ENCODE measurements at regions of chr17 and their contacts with region 1.

Region 1: DNA sequence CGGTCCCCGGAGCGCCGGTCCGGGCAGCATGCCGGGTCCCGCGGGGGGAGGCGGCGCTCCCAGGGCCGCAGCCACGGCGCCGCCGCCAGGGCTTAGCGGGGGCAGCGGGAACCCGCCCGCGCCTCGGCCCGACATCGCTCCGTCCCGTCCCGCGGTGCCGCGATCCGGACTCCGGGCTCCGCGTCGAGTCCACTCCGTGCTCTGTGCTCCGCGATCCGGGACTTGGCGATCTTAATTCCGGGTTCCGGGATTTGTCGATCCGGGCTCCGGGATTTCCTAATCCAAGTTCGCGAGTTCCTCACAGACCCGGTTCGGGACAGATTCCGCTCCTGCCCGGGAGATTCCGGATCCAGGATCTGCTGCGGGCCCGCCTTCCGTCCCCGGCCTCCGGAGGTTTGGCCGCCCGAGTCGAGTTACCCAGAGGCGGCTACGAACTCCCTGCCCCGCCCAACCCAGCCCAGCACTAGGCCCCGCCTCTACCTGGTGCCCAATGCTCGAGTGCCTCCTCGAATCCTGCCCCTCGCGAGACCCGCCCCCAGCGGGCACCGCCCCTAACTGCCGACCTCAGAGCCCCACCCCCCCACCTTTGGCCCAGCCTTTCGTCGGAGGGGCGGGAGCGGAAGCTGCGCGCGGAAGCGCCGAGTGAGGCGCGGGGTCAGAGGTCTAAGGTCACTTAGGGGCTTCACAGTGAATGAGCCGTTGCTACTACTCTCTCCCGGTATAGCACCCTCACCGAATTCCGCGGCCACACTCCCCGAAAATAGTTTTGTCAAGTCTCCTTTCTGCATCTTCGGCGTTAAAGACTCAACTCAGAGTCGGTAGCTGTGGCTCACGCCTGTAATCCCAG is at the start of gene SMARCD2:
- DNase-seq: peak; percentile 100
- H3K4me3 ChIP-seq: peak within 1 kb of the TSS; percentile 59 to 76
- H3K27ac ChIP-seq: peak within 1 kb of the TSS; percentile 67 to 97
- H3K4me1 ChIP-seq: peaks cover 27 to 39% of the 10 kb centered on the region in 2 experiments
- H3K27me3 ChIP-seq: no peaks in the 10 kb centered on the region
- CTCF ChIP-seq: no peak
- EP300 ChIP-seq: peak; percentile 60 to 76; a peak in 3 of 4 replicates
- RAD21 ChIP-seq: no peak
- polyA plus RNA-seq, gene SMARCD2: 89.1 and 106 TPM in 2 replicates

Region 2: GRCh38 chr17:63762161-63763078 is 80.3 kb before region 1 on chr17:
- CTCF ChIA-PET with region 1: no interaction called
- POLR2A ChIA-PET with region 1: no interaction called
- DNase-seq: no peak
- H3K4me3 ChIP-seq: no peak overlapping the region
- H3K27ac ChIP-seq: no peak overlapping the region
- H3K4me1 ChIP-seq: no peaks in the 10 kb centered on the region
- H3K27me3 ChIP-seq: no peaks in the 10 kb centered on the region
- CTCF ChIP-seq: no peak
- EP300 ChIP-seq: no peak
- RAD21 ChIP-seq: no peak

Region 3: DNA sequence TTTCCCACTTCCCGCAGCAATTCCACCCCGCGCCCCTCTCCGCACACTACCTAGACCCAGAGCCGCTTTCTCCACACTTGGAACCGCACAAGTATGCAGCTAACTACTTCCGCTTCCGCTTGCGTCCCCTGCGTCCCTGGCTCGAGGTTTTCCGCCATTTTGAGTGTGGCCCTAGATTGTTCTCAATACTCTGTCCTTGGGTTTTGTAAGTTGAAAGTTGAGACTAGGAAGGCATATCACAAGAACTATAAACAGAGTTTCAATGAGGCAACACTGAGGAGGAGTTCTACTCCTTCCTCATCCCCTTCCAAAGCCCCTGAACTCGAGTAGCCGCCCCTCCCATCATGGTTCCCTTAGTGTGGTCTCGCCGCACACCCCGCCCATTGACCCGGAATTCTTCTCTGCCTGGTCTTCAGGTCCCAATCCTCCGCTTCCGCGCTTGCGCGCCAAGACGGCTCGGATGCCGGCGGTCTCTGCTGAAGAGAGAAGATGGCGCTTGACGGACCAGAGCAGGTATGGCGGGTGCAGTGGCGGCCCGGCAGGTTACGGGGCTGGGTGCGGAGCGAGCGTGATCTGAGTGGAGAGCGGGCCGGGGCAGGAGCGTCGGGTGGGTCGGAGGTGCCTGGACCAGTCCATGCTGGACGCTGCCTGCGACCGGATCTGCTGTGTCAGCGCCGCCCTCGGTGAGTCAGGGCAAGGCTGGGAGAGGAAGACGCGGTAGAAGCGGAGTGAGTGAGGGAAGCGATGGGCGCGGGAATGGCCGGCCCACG is 15.6 kb before region 1 on chr17 and contains the starts of genes FTSJ3 and PSMC5:
- CTCF ChIA-PET with region 1: interaction called, 96 read pairs
- POLR2A ChIA-PET with region 1: interaction called, 108 read pairs
- DNase-seq: peak; percentile 95
- H3K4me3 ChIP-seq: peak within 1 kb of the TSS; percentile 94 to 100
- H3K27ac ChIP-seq: peak within 1 kb of the TSS; percentile 90 to 99
- H3K4me1 ChIP-seq: peaks cover 9 to 37% of the 10 kb centered on the region in 2 experiments; a peak in 2 of 4 replicates
- H3K27me3 ChIP-seq: no peaks in the 10 kb centered on the region
- CTCF ChIP-seq: peak; percentile 56
- EP300 ChIP-seq: no peak; a peak in 1 of 4 replicates
- RAD21 ChIP-seq: no peak
- polyA plus RNA-seq, gene FTSJ3: 148 and 180 TPM in 2 replicates
- polyA plus RNA-seq, gene PSMC5: 424 and 468 TPM in 2 replicates

Region 4: GRCh38 chr17:63859257-63859656 is 16.5 kb after region 1 on chr17:
- CTCF ChIA-PET with region 1: interaction called, 20 read pairs
- POLR2A ChIA-PET with region 1: interaction called, 3 read pairs
- DNase-seq: no peak
- H3K4me3 ChIP-seq: no peak overlapping the region
- H3K27ac ChIP-seq: no peak overlapping the region
- H3K4me1 ChIP-seq: no peaks in the 10 kb centered on the region
- H3K27me3 ChIP-seq: peaks cover 31% of the 10 kb centered on the region
- CTCF ChIP-seq: no peak
- EP300 ChIP-seq: no peak
- RAD21 ChIP-seq: no peak

Measured in SK-N-SH (cell line).